GM12878 (cell line): ENCODE measurements at regions of chr5 and their contacts with region 1.

Region 1: DNA sequence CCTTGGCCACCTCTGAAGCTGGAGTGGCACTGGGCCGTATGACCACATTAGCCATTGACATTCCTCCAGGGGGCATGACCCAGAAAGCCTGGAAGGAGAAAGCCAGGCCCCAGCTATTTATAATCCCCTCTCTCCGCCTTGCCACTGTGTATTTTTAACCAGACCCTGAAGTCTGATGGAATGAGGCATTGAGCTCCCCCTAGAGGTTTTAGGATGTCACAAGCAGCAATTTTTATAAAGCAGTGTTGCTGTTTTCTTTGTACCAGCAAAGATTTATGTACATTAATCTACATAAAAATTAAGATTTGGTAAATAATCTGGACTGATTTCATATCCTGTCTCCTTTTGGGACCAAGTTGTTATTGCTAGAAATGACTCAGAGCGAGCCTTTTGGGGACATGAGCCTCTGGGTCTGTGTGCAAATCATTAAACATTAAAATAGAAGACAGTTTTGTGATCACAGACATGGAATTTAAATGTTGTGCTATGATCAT is 127.1 kb downstream of the TRIO start:
- DNase-seq: no peak
- ATAC-seq: peak; percentile 80
- H3K4me3 ChIP-seq: no peak overlapping the region
- H3K27ac ChIP-seq: peak overlapping the region; percentile 19; the same call in 1 of the 2 replicates
- H3K4me1 ChIP-seq: peaks cover 20% of the 10 kb centered on the region
- H3K27me3 ChIP-seq: no peaks in the 10 kb centered on the region
- CTCF ChIP-seq: peak; percentile 77 to 78 (median 78)
- EP300 ChIP-seq: no peak
- POLR2A ChIP-seq: no peak
- RAD21 ChIP-seq: peak; percentile 93

Region 2: GRCh38 chr5:13987843-13988464 is 282.3 kb before region 1 on chr5:
- CTCF ChIA-PET with region 1: interaction called, 17 read pairs
- POLR2A ChIA-PET with region 1: no interaction called
- RAD21 ChIA-PET with region 1: interaction called, 3 read pairs
- SMC1A ChIA-PET with region 1: interaction called, 7 read pairs
- in situ Hi-C with region 1: no loop called
- intact Hi-C with region 1: loop called (anchors 2 kb)
- DNase-seq: no peak
- ATAC-seq: peak; percentile 84
- H3K4me3 ChIP-seq: no peak overlapping the region
- H3K27ac ChIP-seq: no peak overlapping the region
- H3K4me1 ChIP-seq: no peaks in the 10 kb centered on the region
- H3K27me3 ChIP-seq: peaks cover 0 to 2% of the 10 kb centered on the region in 2 experiments; a peak in 1 of 4 replicates
- CTCF ChIP-seq: peak; percentile 70 to 89 (median 83)
- EP300 ChIP-seq: no peak
- POLR2A ChIP-seq: no peak
- RAD21 ChIP-seq: peak; percentile 97

Region 3: DNA sequence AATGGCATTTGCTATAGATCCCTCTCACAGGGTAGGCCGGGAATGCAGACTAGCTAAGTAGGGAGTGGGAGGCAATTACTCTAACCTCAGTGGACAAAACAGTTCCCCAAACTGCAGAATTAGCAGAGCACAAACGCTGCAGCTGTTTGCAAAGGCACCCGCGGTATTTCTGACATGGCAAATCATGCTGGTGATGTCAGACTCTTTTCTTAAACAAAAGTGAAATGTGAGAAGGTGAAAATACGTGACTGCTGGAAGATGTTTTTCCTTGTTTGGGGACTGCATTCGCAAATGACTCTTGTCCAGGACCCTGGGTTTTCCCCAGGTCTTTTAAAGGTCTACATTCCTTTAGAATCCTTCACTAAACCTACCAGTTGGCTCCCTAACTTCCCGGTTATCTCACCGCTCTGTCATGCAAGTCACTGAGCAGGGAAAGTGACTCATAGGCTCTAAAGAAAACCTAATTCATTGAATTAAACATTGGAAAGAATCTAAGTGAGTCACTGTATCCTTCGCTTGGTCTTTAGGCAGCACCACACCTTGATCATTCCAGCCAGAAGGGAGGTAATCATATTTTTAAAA is 234.3 kb before region 1 on chr5:
- CTCF ChIA-PET with region 1: no interaction called
- POLR2A ChIA-PET with region 1: no interaction called
- RAD21 ChIA-PET with region 1: no interaction called
- SMC1A ChIA-PET with region 1: no interaction called
- in situ Hi-C with region 1: no loop called
- intact Hi-C with region 1: no loop called
- DNase-seq: no peak
- ATAC-seq: peak; percentile 59
- H3K4me3 ChIP-seq: no peak overlapping the region
- H3K27ac ChIP-seq: no peak overlapping the region
- H3K4me1 ChIP-seq: no peaks in the 10 kb centered on the region
- H3K27me3 ChIP-seq: peaks cover 0 to 4% of the 10 kb centered on the region in 2 experiments; a peak in 2 of 4 replicates
- CTCF ChIP-seq: no peak
- EP300 ChIP-seq: peak in 1 of 2 experiments; percentile 25; a peak in 1 of 4 replicates
- POLR2A ChIP-seq: no peak
- RAD21 ChIP-seq: no peak

Region 4: DNA sequence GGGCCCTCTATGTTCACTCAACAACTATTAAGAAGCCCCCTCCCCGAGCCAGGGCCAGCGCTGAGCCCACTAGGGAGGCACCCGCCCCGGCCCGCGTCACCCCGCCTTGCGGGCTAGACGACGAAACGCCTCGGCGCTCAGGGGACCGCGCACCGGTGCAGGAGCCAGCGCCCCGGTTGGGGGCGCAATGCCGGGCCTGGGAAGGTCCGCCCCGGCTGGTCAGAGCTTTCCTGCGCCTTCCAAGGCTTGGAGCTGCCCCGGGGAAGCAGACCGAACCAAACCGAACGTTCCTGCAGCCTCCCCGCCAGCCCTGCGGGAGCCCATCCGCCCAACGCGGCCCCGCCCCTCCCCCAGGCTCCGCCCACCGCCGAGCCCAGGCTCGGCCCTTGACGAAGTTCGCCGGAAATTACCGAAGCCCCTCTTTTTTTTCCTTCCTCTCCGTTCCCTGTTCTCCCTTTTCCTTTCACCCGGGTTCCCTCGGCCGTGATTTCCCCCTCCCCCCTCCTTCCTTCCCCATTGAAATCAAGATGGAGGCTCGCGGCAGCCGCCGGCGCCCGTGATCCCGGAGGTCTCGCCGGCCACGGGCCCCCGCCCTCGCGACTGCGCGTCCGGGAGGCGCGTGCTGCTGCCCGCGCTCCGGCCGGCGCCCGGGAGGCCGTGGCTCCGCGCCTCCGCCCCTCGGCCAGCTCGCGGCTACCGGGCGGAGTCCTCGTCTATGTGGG is 127.3 kb before region 1 on chr5 and contains the start of gene TRIO:
- CTCF ChIA-PET with region 1: interaction called, 21 read pairs
- POLR2A ChIA-PET with region 1: interaction called, 6 read pairs
- RAD21 ChIA-PET with region 1: interaction called, 13 read pairs
- SMC1A ChIA-PET with region 1: interaction called, 29 read pairs
- in situ Hi-C with region 1: no loop called
- intact Hi-C with region 1: loop called (anchors 1 kb)
- DNase-seq: no peak
- ATAC-seq: peak; percentile 63
- H3K4me3 ChIP-seq: peak within 1 kb of the TSS; percentile 100
- H3K27ac ChIP-seq: peak within 1 kb of the TSS; percentile 70
- H3K4me1 ChIP-seq: peaks cover 14% of the 10 kb centered on the region
- H3K27me3 ChIP-seq: no peaks in the 10 kb centered on the region
- CTCF ChIP-seq: peak; percentile 44 to 56 (median 53); a peak in 5 of 6 replicates
- EP300 ChIP-seq: no peak
- POLR2A ChIP-seq: peak; percentile 73
- RAD21 ChIP-seq: 0 out of 2 replicates have a peak, but pooled peaks have one; percentile 11
- polyA plus RNA-seq, gene TRIO: 5.1 to 5.8 TPM

Region 5: DNA sequence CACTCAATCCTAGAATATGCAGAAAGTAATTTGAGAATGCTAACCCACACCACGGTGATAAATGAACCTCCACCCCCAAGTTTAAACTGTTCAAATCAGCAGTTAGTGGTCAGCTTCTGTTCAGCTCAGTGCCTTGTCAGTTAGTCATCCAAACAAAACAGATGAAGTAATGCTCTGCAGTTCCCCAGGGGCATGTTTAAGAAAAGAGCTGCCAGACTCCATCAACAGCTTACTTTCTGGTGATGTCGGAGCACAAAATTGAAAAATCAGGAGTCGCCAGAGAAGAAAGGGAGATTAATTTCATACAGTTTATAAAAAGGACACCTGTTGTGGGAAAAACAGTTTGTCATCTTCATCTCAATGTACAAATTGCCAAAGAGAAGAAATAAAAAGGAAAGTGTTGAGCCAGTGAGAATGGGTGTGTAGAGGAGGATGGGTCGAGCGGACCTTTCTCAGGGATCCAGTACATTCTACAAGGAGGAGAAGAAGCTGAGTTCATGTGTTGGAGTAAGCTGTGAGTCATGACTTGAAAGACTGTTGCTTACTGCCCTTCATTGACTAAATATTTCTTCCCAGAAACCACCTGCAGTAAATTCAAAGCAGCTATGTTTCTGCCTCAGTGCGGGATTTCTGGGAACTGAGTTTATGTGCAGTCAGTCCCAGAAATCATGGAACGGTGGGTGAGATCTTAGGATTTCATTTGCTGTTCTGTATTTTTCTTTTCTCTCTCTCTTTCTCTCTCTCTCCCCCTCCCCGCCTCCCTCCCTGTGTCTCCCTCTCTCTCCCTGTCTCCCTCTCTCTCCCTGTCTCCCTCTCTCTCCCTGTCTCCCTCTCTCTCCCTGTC is 113.4 kb before region 1 on chr5:
- CTCF ChIA-PET with region 1: interaction called, 16 read pairs
- POLR2A ChIA-PET with region 1: interaction called, 7 read pairs
- RAD21 ChIA-PET with region 1: interaction called, 12 read pairs
- SMC1A ChIA-PET with region 1: interaction called, 41 read pairs
- in situ Hi-C with region 1: no loop called
- intact Hi-C with region 1: no loop called
- DNase-seq: peak; percentile 67
- ATAC-seq: peak; percentile 75
- H3K4me3 ChIP-seq: peak overlapping the region; percentile 20
- H3K27ac ChIP-seq: peak overlapping the region; percentile 92
- H3K4me1 ChIP-seq: peaks cover 60% of the 10 kb centered on the region
- H3K27me3 ChIP-seq: no peaks in the 10 kb centered on the region
- CTCF ChIP-seq: no peak
- EP300 ChIP-seq: peak in 1 of 2 experiments; percentile 61; a peak in 2 of 4 replicates
- POLR2A ChIP-seq: peak; percentile 39; the same call in 1 of the 2 replicates
- RAD21 ChIP-seq: peak; percentile 8; the same call in 1 of the 2 replicates

Region 6: DNA sequence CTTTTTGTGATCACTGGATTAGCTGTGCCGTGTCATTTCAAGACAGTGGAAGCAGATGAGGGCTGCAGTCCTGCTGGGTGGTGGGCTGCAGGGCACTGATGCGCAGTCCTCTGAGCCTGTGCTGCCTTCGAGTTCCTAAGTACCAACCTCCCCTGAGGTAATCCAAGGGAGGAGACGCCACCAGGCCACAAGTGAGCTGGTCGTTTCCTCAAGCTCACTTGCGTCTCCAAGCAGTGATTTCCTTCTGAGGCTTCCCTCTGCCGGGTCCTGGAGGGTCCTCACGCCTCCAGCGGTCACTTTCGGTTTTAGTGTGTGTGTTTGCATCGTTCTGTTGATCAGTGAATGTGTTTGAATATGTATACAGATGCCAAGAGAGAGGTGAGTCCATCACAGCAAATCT is 11.4 kb before region 1 on chr5:
- CTCF ChIA-PET with region 1: interaction called, 39 read pairs
- POLR2A ChIA-PET with region 1: interaction called, 3 read pairs
- RAD21 ChIA-PET with region 1: interaction called, 14 read pairs
- SMC1A ChIA-PET with region 1: interaction called, 26 read pairs
- in situ Hi-C with region 1: no loop called
- intact Hi-C with region 1: no loop called
- DNase-seq: no peak
- ATAC-seq: peak; percentile 65
- H3K4me3 ChIP-seq: peak overlapping the region; percentile 56; the same call in 1 of the 2 replicates
- H3K27ac ChIP-seq: peak overlapping the region; percentile 14
- H3K4me1 ChIP-seq: peaks cover 37% of the 10 kb centered on the region
- H3K27me3 ChIP-seq: no peaks in the 10 kb centered on the region
- CTCF ChIP-seq: peak in 2 of 3 experiments; percentile 24 to 33; a peak in 1 of 6 replicates
- EP300 ChIP-seq: no peak
- POLR2A ChIP-seq: no peak
- RAD21 ChIP-seq: no peak

Region 7: GRCh38 chr5:14286574-14287421 is 16.5 kb after region 1 on chr5:
- CTCF ChIA-PET with region 1: interaction called, 56 read pairs
- POLR2A ChIA-PET with region 1: interaction called, 7 read pairs
- RAD21 ChIA-PET with region 1: interaction called, 22 read pairs
- SMC1A ChIA-PET with region 1: interaction called, 21 read pairs
- in situ Hi-C with region 1: no loop called
- intact Hi-C with region 1: no loop called
- DNase-seq: peak; percentile 86
- ATAC-seq: peak; percentile 95
- H3K4me3 ChIP-seq: no peak overlapping the region
- H3K27ac ChIP-seq: peak overlapping the region; percentile 53
- H3K4me1 ChIP-seq: peaks cover 17% of the 10 kb centered on the region
- H3K27me3 ChIP-seq: no peaks in the 10 kb centered on the region
- CTCF ChIP-seq: no peak
- EP300 ChIP-seq: peak; percentile 79 to 90
- POLR2A ChIP-seq: no peak
- RAD21 ChIP-seq: no peak

Region 8: GRCh38 chr5:14298126-14298847 is 28.0 kb after region 1 on chr5:
- CTCF ChIA-PET with region 1: no interaction called
- POLR2A ChIA-PET with region 1: no interaction called
- RAD21 ChIA-PET with region 1: no interaction called
- SMC1A ChIA-PET with region 1: no interaction called
- in situ Hi-C with region 1: no loop called
- intact Hi-C with region 1: no loop called
- DNase-seq: no peak
- ATAC-seq: no peak
- H3K4me3 ChIP-seq: no peak overlapping the region
- H3K27ac ChIP-seq: no peak overlapping the region
- H3K4me1 ChIP-seq: no peaks in the 10 kb centered on the region
- H3K27me3 ChIP-seq: no peaks in the 10 kb centered on the region
- CTCF ChIP-seq: no peak
- EP300 ChIP-seq: no peak
- POLR2A ChIP-seq: no peak
- RAD21 ChIP-seq: no peak

Region 9: DNA sequence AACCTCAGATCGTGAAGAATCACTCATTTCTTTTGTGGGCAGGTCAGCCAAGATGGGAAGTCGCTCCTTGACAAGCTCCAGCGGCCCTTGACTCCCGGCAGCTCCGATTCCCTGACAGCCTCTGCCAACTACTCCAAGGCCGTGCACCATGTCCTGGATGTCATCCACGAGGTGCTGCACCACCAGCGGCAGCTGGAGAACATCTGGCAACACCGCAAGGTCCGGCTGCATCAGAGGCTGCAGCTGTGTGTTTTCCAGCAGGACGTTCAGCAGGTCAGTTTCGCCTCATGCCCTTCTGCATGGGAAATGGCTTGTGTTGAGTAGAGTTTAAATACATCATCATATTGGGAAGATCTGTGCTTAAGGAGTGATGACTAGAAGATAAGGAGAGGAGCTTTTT is 46.2 kb after region 1 on chr5:
- CTCF ChIA-PET with region 1: no interaction called
- POLR2A ChIA-PET with region 1: no interaction called
- RAD21 ChIA-PET with region 1: no interaction called
- SMC1A ChIA-PET with region 1: no interaction called
- in situ Hi-C with region 1: no loop called
- intact Hi-C with region 1: no loop called
- DNase-seq: no peak
- ATAC-seq: no peak
- H3K4me3 ChIP-seq: no peak overlapping the region
- H3K27ac ChIP-seq: no peak overlapping the region
- H3K4me1 ChIP-seq: no peaks in the 10 kb centered on the region
- H3K27me3 ChIP-seq: no peaks in the 10 kb centered on the region
- CTCF ChIP-seq: no peak
- EP300 ChIP-seq: no peak
- POLR2A ChIP-seq: no peak
- RAD21 ChIP-seq: no peak